HCT116 (cell line): ENCODE measurements at regions of chr7 and their contacts with region 1.

Region 1: GRCh38 chr7:786472-787255 is 45.6 kb upstream of the SUN1 start:
- DNase-seq: peak; percentile 18
- ATAC-seq: peak; percentile 92
- H3K4me3 ChIP-seq: no peak overlapping the region
- H3K27ac ChIP-seq: no peak overlapping the region
- H3K4me1 ChIP-seq: no peaks in the 10 kb centered on the region
- H3K27me3 ChIP-seq: no peaks in the 10 kb centered on the region
- CTCF ChIP-seq: peak; percentile 88 to 91 (median 90)
- POLR2A ChIP-seq: no peak
- RAD21 ChIP-seq: peak; percentile 95

Region 2: DNA sequence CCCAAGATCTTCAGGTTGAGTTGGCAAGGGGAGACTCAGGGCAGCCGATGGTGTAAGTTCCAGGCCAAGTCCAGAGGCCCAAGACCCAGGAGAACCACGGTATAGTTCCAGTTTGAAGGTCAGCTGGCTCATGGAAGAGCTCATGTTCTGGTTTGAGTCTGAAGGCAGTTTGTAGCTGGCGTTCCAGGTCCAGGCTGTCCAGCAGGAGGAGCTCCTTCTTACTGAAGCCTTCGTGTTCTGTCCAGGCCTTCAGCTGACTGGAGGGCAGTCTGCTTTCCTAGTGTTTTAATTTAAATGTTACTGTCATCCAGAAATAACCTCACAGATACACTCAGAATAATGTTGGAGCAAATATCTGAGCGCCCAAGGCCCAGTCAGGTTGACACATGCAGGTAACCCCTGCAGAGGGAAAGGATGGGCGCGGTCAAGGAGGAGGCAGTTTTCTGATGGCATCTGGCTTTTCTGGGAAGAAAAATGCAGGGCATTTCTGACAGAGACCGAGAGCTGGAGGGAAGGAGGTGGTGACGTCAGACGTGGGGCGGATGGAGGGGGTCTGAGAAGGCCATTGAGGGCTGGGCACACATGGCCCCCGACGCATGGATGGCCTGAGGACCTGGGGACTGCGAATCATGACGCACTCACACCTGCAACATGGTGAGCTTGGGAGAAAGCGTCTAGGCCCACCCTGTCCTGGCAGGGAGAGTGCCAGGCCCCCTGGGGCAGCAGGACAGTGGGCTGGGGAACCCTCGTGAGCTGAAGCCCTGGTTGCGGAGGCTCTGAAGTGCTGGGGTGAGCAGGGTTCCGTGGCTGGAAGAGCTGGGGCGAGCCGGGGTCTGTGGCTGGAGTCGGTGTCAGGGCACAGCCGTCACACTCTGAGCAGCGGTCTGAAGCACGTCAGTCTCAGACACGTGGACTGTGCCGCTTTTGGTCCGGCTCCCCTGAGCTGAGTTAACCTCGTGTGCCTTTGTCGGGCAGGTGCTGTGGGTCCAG is 50.0 kb after region 1 on chr7:
- CTCF ChIA-PET with region 1: interaction called, 3 read pairs
- POLR2A ChIA-PET with region 1: no interaction called
- RAD21 ChIA-PET with region 1: interaction called in 1 of 2 experiments, 5 read pairs
- intact Hi-C with region 1: loop called (anchors 2 kb)
- DNase-seq: peak; percentile 27
- ATAC-seq: peak; percentile 43
- H3K4me3 ChIP-seq: no peak overlapping the region
- H3K27ac ChIP-seq: no peak overlapping the region; the same call in 1 of the 2 replicates
- H3K4me1 ChIP-seq: peaks cover 21 to 49% of the 10 kb centered on the region in 2 experiments
- H3K27me3 ChIP-seq: no peaks in the 10 kb centered on the region
- CTCF ChIP-seq: peak in 2 of 3 experiments; percentile 54 to 72; a peak in 4 of 6 replicates
- POLR2A ChIP-seq: no peak
- RAD21 ChIP-seq: no peak

Region 3: GRCh38 chr7:873367-874002 is 86.8 kb after region 1 on chr7:
- CTCF ChIA-PET with region 1: interaction called, 4 read pairs
- POLR2A ChIA-PET with region 1: no interaction called
- RAD21 ChIA-PET with region 1: no interaction called
- intact Hi-C with region 1: loop called (anchors 1 kb)
- DNase-seq: peak; percentile 72
- ATAC-seq: peak; percentile 43
- H3K4me3 ChIP-seq: no peak overlapping the region
- H3K27ac ChIP-seq: peak overlapping the region; percentile 36
- H3K4me1 ChIP-seq: peaks cover 10 to 26% of the 10 kb centered on the region in 2 experiments; a peak in 3 of 4 replicates
- H3K27me3 ChIP-seq: no peaks in the 10 kb centered on the region
- CTCF ChIP-seq: peak in 2 of 3 experiments; percentile 96 to 99; a peak in 4 of 6 replicates
- POLR2A ChIP-seq: no peak
- RAD21 ChIP-seq: no peak

Region 4: DNA sequence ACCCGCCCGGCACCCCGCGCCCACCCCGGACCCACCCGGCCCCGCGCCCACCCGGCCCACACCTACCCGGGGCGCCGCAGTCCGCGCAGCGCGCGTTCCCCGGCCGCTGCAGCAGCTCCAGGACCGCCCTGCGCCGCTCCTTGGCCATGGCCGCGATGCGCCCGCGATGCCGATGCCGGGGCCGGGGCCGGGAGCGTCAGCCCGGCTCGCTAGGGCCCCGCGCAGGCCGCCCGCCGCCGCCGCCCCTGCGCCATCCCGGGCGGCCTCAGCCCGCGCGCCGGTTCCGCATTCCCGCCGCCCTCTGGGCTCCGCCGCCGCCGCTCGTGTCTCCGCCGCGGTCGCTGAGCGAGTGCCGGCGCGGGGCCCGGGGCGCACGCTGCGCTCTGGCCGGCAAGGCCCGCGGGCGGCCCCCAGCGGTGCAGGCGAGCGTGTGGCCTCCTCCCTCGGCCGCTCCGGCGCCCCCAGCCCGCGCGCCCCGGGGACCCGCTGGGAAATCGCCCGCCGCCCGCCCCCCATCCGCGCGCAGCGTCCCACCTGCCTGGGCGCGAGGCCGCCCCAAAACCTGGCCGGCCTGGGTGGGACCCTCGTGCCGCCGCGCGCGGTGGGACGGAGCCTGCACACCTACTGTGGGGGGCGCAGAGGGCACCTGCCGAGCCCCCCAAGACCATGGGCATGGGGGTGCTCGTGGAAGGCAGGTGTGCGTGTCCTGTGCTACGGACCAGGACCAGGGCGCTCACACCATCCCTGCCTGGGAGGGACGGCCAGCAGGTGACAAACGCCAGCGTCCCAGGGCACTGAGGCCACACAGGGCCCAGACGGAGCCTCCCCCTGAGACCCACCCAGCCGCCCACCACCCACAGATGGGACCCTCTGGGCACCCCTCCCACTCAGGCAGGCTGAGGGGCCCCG is 167.9 kb after region 1 on chr7 and contains the start of gene ADAP1:
- CTCF ChIA-PET with region 1: no interaction called
- POLR2A ChIA-PET with region 1: no interaction called
- RAD21 ChIA-PET with region 1: no interaction called
- intact Hi-C with region 1: loop called (anchors 1 kb)
- DNase-seq: no peak
- ATAC-seq: peak; percentile 77
- H3K4me3 ChIP-seq: peak within 1 kb of the TSS; percentile 57 to 69
- H3K27ac ChIP-seq: peak within 1 kb of the TSS; percentile 65
- H3K4me1 ChIP-seq: peaks cover 2 to 28% of the 10 kb centered on the region in 2 experiments; a peak in 3 of 4 replicates
- H3K27me3 ChIP-seq: no peaks in the 10 kb centered on the region
- CTCF ChIP-seq: peak in 1 of 3 experiments; percentile 4; a peak in 1 of 6 replicates
- POLR2A ChIP-seq: no peak
- RAD21 ChIP-seq: no peak
- total RNA-seq, gene ADAP1: 34.0 TPM